ACHN (cell line): ENCODE measurements at regions of chr4 and their contacts with region 1.

Region 1: GRCh38 chr4:25439918-25440477 is 62.9 kb downstream of the ANAPC4 start:
- DNase-seq: peak; percentile 71

Region 2: DNA sequence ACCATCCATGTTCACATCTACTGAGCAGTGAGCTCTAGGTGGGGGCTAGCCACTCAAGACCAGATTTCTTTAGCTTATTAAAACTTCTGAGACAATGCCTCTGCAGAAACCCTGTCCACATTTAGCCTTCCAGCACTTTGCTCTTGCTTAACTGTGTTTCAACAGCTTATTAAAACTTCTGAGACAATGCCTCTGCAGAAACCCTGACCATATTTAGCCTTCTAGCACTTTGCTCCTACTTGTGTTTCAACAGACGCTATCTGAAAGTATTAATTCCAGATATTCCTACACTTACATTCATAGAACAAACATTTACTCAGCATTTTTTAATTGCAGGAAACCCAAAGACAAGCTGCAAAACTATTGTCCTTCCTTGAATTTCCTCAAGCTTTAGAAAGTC is 330.8 kb after region 1 on chr4:
- in situ Hi-C with region 1: loop called (anchors 5 kb)
- DNase-seq: no peak